Breast epithelium (tissue), 4 donors: ENCODE measurements at regions of chr2 and their contacts with region 1.

Region 1: DNA sequence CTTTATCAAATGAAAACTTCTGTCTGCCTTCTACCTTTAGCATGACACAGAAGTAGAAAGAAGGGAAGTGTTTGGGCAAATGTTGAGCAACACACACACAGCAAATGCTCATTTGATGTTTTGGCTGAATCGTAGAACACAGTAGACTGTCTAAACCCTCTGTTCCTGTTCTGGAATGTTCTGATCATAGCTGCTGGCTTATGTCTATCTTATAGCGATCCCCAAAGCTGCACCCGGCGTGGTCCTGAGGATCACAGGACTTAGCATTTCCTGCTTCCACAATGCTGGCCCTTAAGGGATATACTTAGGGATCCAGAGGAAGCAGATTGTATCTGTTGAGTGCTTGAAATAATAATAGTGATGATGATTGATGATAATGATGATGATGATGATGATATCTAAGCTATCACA is 15.2 kb downstream of the GNLY start:
- DNase-seq: no peak
- H3K4me3 ChIP-seq: no peak overlapping the region
- H3K27ac ChIP-seq: peak overlapping the region; percentile 66 to 83
- H3K4me1 ChIP-seq: peaks cover 0 to 4% of the 10 kb centered on the region in 2 donors
- H3K27me3 ChIP-seq: no peaks in the 10 kb centered on the region
- CTCF ChIP-seq: no peak
- POLR2A ChIP-seq: no peak

Region 2: DNA sequence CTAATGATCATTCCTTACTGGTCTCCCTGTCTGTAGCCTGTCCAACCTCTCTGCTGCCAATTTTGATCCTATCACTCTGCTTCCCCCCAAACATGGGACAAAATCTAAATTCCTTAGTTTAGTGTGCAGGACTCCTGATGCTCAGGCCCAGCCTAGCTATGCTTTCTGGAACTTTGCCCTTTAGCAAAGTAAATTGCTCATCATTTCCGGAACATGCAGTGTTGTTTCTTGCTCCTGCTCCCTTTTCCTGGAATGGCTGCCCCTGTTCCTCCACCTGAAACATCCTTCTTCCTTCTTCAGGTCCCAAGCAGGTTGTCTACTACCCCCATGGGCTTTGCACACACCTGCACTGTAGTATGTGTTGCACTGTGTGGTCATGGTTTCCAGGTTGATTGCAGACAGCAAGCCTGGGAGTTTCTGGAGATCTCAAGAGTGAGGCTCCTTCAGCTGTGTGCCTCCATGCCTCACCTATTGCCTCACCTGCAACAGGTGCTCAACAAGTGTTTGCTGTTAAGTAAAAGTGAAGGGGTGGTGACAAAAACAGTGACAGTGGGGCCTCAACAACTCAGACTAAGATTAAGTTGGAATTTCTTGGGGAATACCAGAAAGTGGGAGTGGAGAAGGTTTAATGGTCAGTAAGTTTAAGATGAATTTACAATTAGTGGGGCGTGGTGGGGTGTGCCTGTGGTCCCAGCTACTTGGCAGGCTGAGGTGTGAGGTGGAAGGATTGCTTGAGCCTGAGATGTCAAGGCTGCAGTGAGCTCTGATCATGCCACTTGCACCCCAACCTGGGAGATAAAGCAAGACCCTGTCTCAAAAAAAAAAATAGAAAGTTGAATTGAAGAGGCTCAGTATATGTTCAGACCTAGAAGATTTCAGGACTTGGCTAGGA is 1073.1 kb before region 1 on chr2:
- intact Hi-C with region 1: no loop called
- DNase-seq: no peak
- H3K4me3 ChIP-seq: no peak overlapping the region
- H3K27ac ChIP-seq: no peak overlapping the region
- H3K4me1 ChIP-seq: no peaks in the 10 kb centered on the region
- H3K27me3 ChIP-seq: no peaks in the 10 kb centered on the region
- CTCF ChIP-seq: no peak
- POLR2A ChIP-seq: no peak

Region 3: DNA sequence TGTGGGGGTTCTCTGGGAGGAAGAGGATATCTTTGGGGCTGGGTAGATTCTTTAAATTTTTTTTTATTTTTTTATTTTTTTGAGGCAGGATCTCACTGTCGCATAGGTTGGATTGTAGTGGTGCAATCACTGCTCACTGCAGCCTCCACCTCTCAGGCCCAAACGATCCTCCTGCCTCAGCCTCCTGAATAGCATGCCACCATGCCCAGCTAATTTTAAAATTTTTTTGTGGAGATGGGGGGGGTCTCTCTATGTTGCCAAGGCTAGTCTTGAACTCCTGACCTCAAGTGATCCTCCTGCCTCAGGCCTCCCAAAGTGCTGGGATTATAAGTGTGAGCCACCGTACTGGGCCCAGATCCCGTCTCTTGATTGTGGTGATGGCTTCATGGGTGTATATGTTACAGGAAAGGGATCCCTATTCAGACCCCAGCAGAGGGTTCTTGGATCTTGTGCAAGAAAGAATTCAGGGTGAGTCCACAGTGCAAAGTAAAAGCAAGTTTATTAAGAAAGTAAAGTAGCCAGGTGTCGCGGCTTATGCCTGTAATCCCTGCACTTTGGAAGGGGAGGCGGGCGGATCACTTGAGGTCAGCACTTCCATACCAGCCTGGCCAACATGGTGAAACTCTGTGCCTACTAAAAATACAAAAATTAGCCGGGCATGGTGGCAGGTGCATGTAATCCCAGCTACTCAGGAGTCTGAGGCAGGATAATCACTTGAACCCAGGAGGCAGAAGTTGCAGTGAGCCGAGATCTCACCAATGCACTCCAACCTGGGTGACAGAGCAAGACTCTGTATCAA is 95.5 kb before region 1 on chr2:
- intact Hi-C with region 1: loop called (anchors 2 kb)
- DNase-seq: no peak
- H3K4me3 ChIP-seq: no peak overlapping the region
- H3K27ac ChIP-seq: no peak overlapping the region
- H3K4me1 ChIP-seq: peaks cover 0 to 8% of the 10 kb centered on the region in 2 donors
- H3K27me3 ChIP-seq: no peaks in the 10 kb centered on the region
- CTCF ChIP-seq: no peak
- POLR2A ChIP-seq: no peak